GM23248 (cell line): ENCODE measurements at regions of chr16 and their contacts with region 1.

Region 1: DNA sequence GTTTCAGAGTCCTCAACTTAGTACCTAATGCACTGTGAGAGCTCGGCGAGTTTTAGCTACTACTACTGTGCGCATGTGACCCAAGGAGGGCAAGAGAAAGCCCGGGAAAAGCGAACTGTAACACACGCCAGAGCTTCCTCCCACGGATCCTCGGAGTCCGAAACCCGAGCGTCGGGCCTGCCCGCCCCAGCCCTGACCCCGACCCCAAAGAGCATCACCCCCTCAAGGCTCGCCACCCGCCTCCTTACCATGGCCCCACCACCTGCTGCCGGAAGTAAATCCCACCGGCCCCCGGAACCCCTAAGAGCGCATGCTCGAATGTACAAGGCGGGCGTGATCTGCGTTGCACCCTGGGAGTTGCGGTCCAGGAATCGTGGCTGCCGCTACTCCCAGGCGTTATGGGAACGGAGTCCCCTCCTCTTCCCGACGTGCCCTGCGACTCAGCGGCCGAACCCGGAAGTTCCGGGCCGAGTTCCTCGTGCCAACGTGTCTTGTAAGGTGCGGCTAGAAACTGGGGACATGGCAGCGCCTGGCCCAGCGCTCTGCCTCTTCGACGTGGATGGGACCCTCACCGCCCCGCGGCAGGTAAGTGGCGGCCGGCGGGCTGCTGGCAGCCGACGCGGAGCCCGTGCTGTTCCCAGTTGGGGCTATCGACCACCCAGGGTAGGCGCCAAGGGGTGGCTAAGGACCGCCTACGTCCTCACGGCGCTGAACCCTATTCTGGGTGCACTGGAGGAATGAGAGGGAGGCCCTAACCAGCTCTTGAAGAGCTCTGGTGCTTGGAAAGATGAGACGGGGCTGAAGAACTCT is at the starts of genes PMM2 and TMEM186:
- DNase-seq: peak; percentile 99
- H3K4me3 ChIP-seq: peak within 1 kb of the TSS; percentile 97
- H3K27ac ChIP-seq: peak within 1 kb of the TSS; percentile 98
- H3K4me1 ChIP-seq: peaks cover 29% of the 10 kb centered on the region
- H3K27me3 ChIP-seq: no peaks in the 10 kb centered on the region
- total RNA-seq, gene PMM2: 39.6 and 61.6 TPM in 2 replicates
- total RNA-seq, gene TMEM186: 2.0 and 4.9 TPM in 2 replicates

Region 2: DNA sequence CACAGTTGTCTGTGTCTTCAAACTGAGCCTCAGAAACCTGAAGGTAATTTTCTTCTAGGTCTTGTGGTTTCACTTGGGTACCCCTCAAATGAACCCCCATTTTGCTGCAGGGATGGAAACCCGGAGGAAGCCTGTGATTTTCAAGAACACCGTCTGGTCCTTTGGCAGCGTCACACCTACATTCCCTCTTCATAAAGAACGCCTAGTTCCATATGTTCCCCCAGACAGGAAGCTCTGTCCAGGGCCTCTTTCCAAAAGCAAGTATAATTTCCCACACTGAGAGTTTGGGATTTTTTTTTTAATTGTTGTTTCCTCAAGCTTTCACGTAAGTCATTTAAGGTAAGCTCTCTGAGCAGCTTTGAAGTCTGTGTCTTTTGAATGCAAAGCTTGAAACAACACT is 722.3 kb before region 1 on chr16:
- in situ Hi-C with region 1: no loop called
- DNase-seq: no peak
- H3K4me3 ChIP-seq: no peak overlapping the region
- H3K27ac ChIP-seq: no peak overlapping the region
- H3K4me1 ChIP-seq: no peaks in the 10 kb centered on the region
- H3K27me3 ChIP-seq: no peaks in the 10 kb centered on the region

Region 3: GRCh38 chr16:8572919-8573724 is 224.4 kb before region 1 on chr16:
- in situ Hi-C with region 1: loop called (anchors 10 kb)
- DNase-seq: peak; percentile 77
- H3K4me3 ChIP-seq: peak overlapping the region; percentile 59
- H3K27ac ChIP-seq: no peak overlapping the region
- H3K4me1 ChIP-seq: peaks cover 11% of the 10 kb centered on the region
- H3K27me3 ChIP-seq: peaks cover 28% of the 10 kb centered on the region

Region 4: DNA sequence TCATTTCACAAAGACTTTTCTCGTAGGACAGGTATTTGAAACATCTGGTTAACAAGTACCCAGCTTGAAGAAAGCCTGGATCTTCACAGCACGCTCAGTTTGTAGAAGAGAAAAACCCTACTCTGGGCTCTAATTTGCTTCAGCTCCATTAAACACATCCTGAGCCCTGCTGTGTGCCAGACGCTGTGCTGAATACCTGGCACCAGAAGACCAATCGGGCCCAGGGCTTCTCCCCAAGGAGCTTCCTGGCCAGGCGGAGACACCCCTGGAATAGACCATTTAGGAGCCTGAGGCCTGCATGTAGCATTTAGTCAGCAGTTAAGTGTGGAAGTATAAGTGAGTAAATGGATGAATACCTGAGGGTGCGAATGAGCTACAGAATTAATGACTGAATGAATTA is 132.0 kb before region 1 on chr16:
- in situ Hi-C with region 1: loop called (anchors 5 kb)
- DNase-seq: no peak
- H3K4me3 ChIP-seq: no peak overlapping the region
- H3K27ac ChIP-seq: no peak overlapping the region
- H3K4me1 ChIP-seq: no peaks in the 10 kb centered on the region
- H3K27me3 ChIP-seq: no peaks in the 10 kb centered on the region

Region 5: GRCh38 chr16:8855011-8855786 is 57.6 kb after region 1 on chr16:
- in situ Hi-C with region 1: no loop called
- DNase-seq: no peak
- H3K4me3 ChIP-seq: no peak overlapping the region
- H3K27ac ChIP-seq: no peak overlapping the region
- H3K4me1 ChIP-seq: peaks cover 12% of the 10 kb centered on the region
- H3K27me3 ChIP-seq: no peaks in the 10 kb centered on the region